OCI-LY7 (cell line): ENCODE measurements at regions of chr15 and their contacts with region 1.

Region 1: GRCh38 chr15:68650901-68651709 is 72.3 kb downstream of the CORO2B start:
- DNase-seq: peak; percentile 62
- H3K4me3 ChIP-seq: no peak overlapping the region
- H3K27ac ChIP-seq: peak overlapping the region; percentile 23
- H3K4me1 ChIP-seq: peaks cover 56% of the 10 kb centered on the region
- CTCF ChIP-seq: peak; percentile 91

Region 2: DNA sequence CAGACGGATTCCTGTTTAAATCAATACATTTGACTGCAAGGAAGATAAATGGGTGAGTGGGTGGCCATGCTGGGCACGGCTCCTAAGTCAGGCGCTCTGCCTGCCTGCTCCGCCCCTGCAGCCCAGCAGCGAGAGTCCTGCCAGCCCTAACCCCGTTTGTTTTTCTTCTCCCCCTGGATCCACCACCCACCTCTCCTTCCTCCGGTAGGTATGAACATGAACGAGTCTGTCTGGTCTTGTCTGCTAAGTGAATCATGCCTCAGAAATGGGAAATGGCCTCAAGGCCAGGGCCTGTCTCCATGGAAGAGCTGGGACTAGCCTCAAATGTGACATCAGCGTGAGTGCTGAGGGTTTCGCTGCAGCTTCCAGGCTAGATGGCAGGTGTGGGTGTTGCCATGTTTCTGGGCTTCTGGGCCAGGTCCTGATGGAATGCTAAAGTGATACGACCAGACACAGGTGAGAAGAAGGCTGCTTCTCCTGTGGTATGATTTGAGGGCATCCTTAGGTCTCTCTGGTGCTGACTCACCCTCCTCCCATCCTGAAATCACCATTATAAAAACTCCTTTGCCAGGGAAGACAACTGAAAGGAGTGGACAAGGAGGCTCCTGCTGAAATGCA is 379.1 kb before region 1 on chr15:
- CTCF ChIA-PET with region 1: no interaction called
- POLR2A ChIA-PET with region 1: no interaction called
- intact Hi-C with region 1: no loop called
- DNase-seq: no peak
- H3K4me3 ChIP-seq: no peak overlapping the region
- H3K27ac ChIP-seq: no peak overlapping the region
- H3K4me1 ChIP-seq: peaks cover 3% of the 10 kb centered on the region
- CTCF ChIP-seq: no peak

Region 3: DNA sequence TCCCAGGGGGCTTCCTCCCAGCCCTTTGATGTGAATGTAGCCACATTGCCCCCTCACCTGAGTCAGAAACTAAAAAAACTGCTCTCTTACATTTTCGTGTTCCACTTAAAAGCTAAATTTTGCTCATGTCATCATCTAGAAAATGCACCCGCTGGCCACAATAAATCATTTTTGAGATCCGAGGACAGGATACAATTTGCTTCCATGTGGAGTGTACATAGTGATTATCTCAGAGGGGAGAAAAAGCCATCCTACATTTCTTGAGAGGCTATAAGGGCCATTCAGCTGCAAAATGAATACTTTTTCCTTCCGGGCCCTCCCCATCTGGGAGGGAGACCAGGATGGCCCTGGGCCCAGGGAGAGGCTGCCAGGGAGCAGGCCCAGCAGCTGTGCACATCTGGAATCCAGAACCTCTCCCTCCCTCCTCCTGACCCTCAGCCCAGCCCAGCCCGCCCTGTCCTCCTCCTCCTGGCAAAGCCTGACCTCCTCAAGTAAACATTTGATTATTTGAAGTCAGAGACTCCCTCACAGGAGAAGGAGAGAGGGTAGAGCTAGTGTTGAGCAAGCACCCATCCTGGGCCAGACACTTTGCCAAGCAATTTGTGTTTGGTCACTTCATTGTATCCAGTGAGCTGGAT is 13.2 kb before region 1 on chr15:
- CTCF ChIA-PET with region 1: interaction called, 6 read pairs
- POLR2A ChIA-PET with region 1: interaction called, 13 read pairs
- intact Hi-C with region 1: loop called (anchors 1 kb)
- DNase-seq: no peak
- H3K4me3 ChIP-seq: no peak overlapping the region
- H3K27ac ChIP-seq: peak overlapping the region; percentile 97
- H3K4me1 ChIP-seq: peaks cover 97% of the 10 kb centered on the region
- CTCF ChIP-seq: no peak

Region 4: GRCh38 chr15:68666120-68666811 is 15.2 kb after region 1 on chr15:
- CTCF ChIA-PET with region 1: no interaction called
- POLR2A ChIA-PET with region 1: interaction called, 3 read pairs
- intact Hi-C with region 1: loop called (anchors 2 kb)
- DNase-seq: peak; percentile 65
- H3K4me3 ChIP-seq: no peak overlapping the region
- H3K27ac ChIP-seq: peak overlapping the region; percentile 23
- H3K4me1 ChIP-seq: peaks cover 31% of the 10 kb centered on the region
- CTCF ChIP-seq: no peak